GM12878 (cell line): ENCODE measurements at regions of chr2 and their contacts with region 1.

Region 1: GRCh38 chr2:231687133-231687852 is 21.0 kb upstream of the PTMA start:
- DNase-seq: no peak
- ATAC-seq: peak; percentile 97
- H3K4me3 ChIP-seq: peak overlapping the region; percentile 28; the same call in 1 of the 2 replicates
- H3K27ac ChIP-seq: peak overlapping the region; percentile 38; the same call in 1 of the 2 replicates
- H3K4me1 ChIP-seq: peaks cover 4% of the 10 kb centered on the region
- H3K27me3 ChIP-seq: no peaks in the 10 kb centered on the region
- CTCF ChIP-seq: peak; percentile 88 to 94 (median 90)
- EP300 ChIP-seq: no peak
- POLR2A ChIP-seq: peak; percentile 57
- RAD21 ChIP-seq: peak; percentile 65

Region 2: GRCh38 chr2:231632559-231633142 is 54.6 kb before region 1 on chr2:
- CTCF ChIA-PET with region 1: no interaction called
- POLR2A ChIA-PET with region 1: no interaction called
- RAD21 ChIA-PET with region 1: no interaction called
- SMC1A ChIA-PET with region 1: no interaction called
- in situ Hi-C with region 1: no loop called
- intact Hi-C with region 1: no loop called
- DNase-seq: no peak
- ATAC-seq: no peak
- H3K4me3 ChIP-seq: no peak overlapping the region
- H3K27ac ChIP-seq: no peak overlapping the region
- H3K4me1 ChIP-seq: no peaks in the 10 kb centered on the region
- H3K27me3 ChIP-seq: no peaks in the 10 kb centered on the region
- CTCF ChIP-seq: no peak
- EP300 ChIP-seq: no peak
- POLR2A ChIP-seq: no peak
- RAD21 ChIP-seq: no peak

Region 3: DNA sequence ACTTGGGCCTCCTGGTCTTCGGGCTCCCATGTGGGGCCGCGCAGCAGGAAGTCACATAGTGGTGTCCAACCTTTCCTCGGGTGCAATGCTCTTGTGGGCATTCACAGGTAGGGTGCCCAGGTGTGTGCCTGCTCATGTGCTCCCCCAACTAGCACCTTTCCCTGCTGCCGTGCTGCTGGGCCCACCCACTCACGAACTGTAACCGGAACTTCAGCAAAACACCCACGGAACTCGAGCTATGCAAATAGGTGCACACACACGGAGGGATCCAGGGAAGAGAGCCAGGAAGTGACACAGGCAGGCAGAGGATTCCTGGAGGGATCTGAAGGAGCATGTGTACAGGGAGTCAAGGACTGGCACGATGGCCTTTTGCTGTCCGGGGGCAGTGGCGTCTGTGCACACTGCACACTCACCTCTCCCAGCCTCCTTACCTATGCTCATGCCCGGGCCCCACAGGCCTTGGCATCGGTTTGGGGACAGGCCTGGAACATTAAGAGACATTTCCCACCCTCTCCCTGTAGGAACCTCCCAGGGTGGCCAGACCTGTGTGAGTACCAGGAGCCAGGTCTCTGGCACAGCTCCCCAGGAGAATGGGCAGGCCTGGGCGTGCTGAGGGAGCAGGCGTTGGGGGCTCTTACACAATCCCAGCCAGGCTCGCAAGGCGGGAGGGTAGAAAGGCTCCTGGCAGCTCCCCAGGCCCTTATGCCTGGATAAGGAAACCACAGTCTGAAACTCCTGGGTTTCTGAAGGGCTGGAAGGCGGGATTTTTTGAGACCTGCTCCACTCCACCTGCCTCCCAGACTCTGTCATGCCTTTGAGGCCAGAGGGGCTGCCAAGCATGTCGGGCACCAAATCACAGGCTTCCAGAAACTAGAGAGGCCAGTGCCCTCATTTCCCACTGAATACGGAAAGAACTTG is 14.4 kb after region 1 on chr2:
- CTCF ChIA-PET with region 1: interaction called, 39 read pairs
- POLR2A ChIA-PET with region 1: interaction called, 7 read pairs
- RAD21 ChIA-PET with region 1: interaction called, 4 read pairs
- SMC1A ChIA-PET with region 1: interaction called, 5 read pairs
- in situ Hi-C with region 1: no loop called
- intact Hi-C with region 1: no loop called
- DNase-seq: no peak
- ATAC-seq: no peak
- H3K4me3 ChIP-seq: no peak overlapping the region
- H3K27ac ChIP-seq: no peak overlapping the region
- H3K4me1 ChIP-seq: peaks cover 11% of the 10 kb centered on the region
- H3K27me3 ChIP-seq: no peaks in the 10 kb centered on the region
- CTCF ChIP-seq: no peak
- EP300 ChIP-seq: no peak
- POLR2A ChIP-seq: no peak
- RAD21 ChIP-seq: no peak

Region 4: DNA sequence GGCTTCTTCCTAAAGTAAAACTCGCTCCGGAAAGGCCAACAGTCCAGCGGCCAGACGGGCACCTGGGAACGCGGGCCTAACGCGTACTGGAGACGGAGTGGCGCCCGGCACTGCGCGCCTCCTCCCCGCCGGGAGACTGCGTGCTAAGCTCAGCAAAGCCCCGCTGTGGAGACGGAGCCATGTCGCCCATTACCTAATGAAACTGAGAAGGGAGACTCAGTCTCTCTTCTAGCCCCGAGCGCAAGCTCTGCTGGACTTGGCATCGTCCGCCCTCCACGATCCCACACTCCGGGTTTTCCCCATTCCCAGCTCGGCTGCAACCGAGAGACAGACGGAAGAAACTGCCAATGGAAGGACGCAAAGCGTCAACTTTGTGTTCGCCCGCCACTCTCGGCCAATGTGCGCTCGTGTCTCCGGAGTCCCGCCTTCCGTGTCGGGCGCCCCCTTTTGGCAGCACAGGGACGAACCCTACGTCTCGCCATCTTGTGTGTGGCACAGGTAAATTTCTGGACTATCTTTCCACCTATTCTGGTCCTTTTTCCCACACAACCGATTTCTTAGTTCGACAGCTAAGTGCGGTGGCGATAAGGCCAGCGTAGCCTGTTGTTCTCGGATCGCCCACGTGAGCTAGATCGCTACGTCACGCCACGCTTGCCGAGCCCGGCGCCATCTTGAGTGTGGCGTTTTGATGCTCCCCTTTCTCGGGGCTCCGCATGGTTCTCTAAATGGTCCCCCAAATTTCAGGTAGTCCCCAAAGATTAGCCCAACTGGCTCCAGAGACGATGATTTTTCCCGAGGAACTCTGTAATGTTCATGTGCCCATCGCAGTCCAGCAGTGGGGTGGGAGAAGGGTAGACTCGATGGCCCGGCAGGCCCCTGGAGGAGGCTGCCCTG is 19.7 kb after region 1 on chr2:
- CTCF ChIA-PET with region 1: interaction called, 811 read pairs
- POLR2A ChIA-PET with region 1: interaction called, 7 read pairs
- RAD21 ChIA-PET with region 1: interaction called, 463 read pairs
- SMC1A ChIA-PET with region 1: interaction called, 5 read pairs
- in situ Hi-C with region 1: no loop called
- intact Hi-C with region 1: no loop called
- DNase-seq: peak; percentile 95
- ATAC-seq: peak; percentile 61
- H3K4me3 ChIP-seq: peak overlapping the region; percentile 91
- H3K27ac ChIP-seq: peak overlapping the region; percentile 100
- H3K4me1 ChIP-seq: peaks cover 14% of the 10 kb centered on the region
- H3K27me3 ChIP-seq: no peaks in the 10 kb centered on the region
- CTCF ChIP-seq: peak; percentile 91 to 99 (median 99); a peak in 5 of 6 replicates
- EP300 ChIP-seq: no peak
- POLR2A ChIP-seq: no peak
- RAD21 ChIP-seq: no peak

Region 5: GRCh38 chr2:232348936-232349335 is 661.6 kb after region 1 on chr2:
- CTCF ChIA-PET with region 1: no interaction called
- POLR2A ChIA-PET with region 1: no interaction called
- RAD21 ChIA-PET with region 1: no interaction called
- SMC1A ChIA-PET with region 1: no interaction called
- in situ Hi-C with region 1: no loop called
- intact Hi-C with region 1: no loop called
- DNase-seq: no peak
- ATAC-seq: peak; percentile 43; the same call in 2 of the 3 replicates
- H3K4me3 ChIP-seq: no peak overlapping the region
- H3K27ac ChIP-seq: no peak overlapping the region
- H3K4me1 ChIP-seq: no peaks in the 10 kb centered on the region
- H3K27me3 ChIP-seq: peaks cover 3 to 6% of the 10 kb centered on the region in 2 experiments; a peak in 3 of 4 replicates
- CTCF ChIP-seq: no peak
- EP300 ChIP-seq: no peak
- POLR2A ChIP-seq: no peak
- RAD21 ChIP-seq: no peak